MCF 10A (cell line): ENCODE measurements at regions of chr21 and their contacts with region 1.

Region 1: DNA sequence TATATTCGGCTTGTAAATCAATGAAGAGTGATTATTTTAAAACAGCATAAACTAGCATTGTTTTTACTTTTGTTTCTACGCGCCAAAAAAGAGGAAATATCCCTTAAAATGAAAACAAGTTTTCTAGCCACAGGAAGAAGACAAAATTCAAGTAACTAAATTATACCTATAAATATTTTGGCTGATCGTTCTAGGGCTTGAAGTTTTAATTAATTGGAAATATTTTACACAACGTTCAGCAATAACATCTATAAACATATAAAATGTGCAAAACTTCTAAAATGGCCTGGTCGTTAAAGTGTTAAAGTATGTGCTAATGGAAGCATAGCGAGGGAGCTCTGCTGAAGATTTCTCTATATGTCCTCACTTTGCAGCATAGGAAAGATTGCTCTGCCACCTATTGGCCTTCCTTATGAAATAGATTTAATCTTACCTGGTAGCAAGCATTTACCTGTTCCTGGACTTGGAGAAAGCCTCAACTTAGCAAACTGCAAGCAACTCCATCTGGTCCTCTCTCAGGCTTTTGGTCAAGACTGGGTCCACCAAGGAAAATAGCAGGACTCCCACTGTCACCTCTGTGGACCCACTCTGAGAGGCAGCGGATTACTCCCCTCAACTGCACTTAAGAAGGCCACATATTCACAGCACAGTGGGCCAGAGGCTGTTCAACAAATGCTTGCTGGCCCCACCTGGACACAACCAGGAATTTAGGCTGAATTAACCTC is 351.3 kb upstream of the RUNX1 start:
- DNase-seq: peak; percentile 74
- H3K4me3 Mint-ChIP-seq: no peak overlapping the region
- H3K27ac Mint-ChIP-seq: peak overlapping the region; percentile 10
- H3K4me1 Mint-ChIP-seq: peaks cover 17% of the 10 kb centered on the region
- H3K27me3 Mint-ChIP-seq: no peaks in the 10 kb centered on the region
- CTCF ChIP-seq: peak; percentile 65

Region 2: GRCh38 chr21:34688145-34688544 is 712.2 kb before region 1 on chr21:
- CTCF ChIA-PET with region 1: interaction called, 5 read pairs
- POLR2A ChIA-PET with region 1: interaction called, 3 read pairs
- intact Hi-C with region 1: loop called (anchors 1 kb)
- DNase-seq: peak; percentile 65
- H3K4me3 Mint-ChIP-seq: peak overlapping the region; percentile 33
- H3K27ac Mint-ChIP-seq: no peak overlapping the region
- H3K4me1 Mint-ChIP-seq: peaks cover 11% of the 10 kb centered on the region
- H3K27me3 Mint-ChIP-seq: no peaks in the 10 kb centered on the region
- CTCF ChIP-seq: peak; percentile 67

Region 3: GRCh38 chr21:34974162-34974981 is 426.0 kb before region 1 on chr21:
- CTCF ChIA-PET with region 1: no interaction called
- POLR2A ChIA-PET with region 1: no interaction called
- intact Hi-C with region 1: no loop called
- DNase-seq: no peak
- H3K4me3 Mint-ChIP-seq: no peak overlapping the region
- H3K27ac Mint-ChIP-seq: no peak overlapping the region
- H3K4me1 Mint-ChIP-seq: no peaks in the 10 kb centered on the region
- H3K27me3 Mint-ChIP-seq: no peaks in the 10 kb centered on the region
- CTCF ChIP-seq: no peak

Region 4: GRCh38 chr21:35303085-35303484 is 97.3 kb before region 1 on chr21:
- CTCF ChIA-PET with region 1: no interaction called
- POLR2A ChIA-PET with region 1: no interaction called
- intact Hi-C with region 1: loop called (anchors 5 kb)
- DNase-seq: peak; percentile 92
- H3K4me3 Mint-ChIP-seq: no peak overlapping the region
- H3K27ac Mint-ChIP-seq: peak overlapping the region; percentile 61
- H3K4me1 Mint-ChIP-seq: peaks cover 11% of the 10 kb centered on the region
- H3K27me3 Mint-ChIP-seq: no peaks in the 10 kb centered on the region
- CTCF ChIP-seq: no peak

Region 5: GRCh38 chr21:35840197-35840799 is 439.9 kb after region 1 on chr21:
- CTCF ChIA-PET with region 1: interaction called, 9 read pairs
- POLR2A ChIA-PET with region 1: interaction called, 4 read pairs
- intact Hi-C with region 1: loop called (anchors 1 kb)
- DNase-seq: peak; percentile 72
- H3K4me3 Mint-ChIP-seq: no peak overlapping the region
- H3K27ac Mint-ChIP-seq: no peak overlapping the region
- H3K4me1 Mint-ChIP-seq: no peaks in the 10 kb centered on the region
- H3K27me3 Mint-ChIP-seq: no peaks in the 10 kb centered on the region
- CTCF ChIP-seq: peak; percentile 78

Region 6: GRCh38 chr21:36028127-36029069 is 628.0 kb after region 1 on chr21:
- CTCF ChIA-PET with region 1: no interaction called
- POLR2A ChIA-PET with region 1: no interaction called
- intact Hi-C with region 1: loop called (anchors 1 kb)
- DNase-seq: peak; percentile 70
- H3K4me3 Mint-ChIP-seq: no peak overlapping the region
- H3K27ac Mint-ChIP-seq: no peak overlapping the region
- H3K4me1 Mint-ChIP-seq: peaks cover 7% of the 10 kb centered on the region
- H3K27me3 Mint-ChIP-seq: no peaks in the 10 kb centered on the region
- CTCF ChIP-seq: peak; percentile 93